ENCODE measurements at regions of chr6 and their contacts with region 1.

Region 1: GRCh38 chr6:31493875-31494694 is 3.9 kb upstream of the MICB start:
- DNase-seq: no peak
- ATAC-seq: peak; percentile 73
- H3K4me3 ChIP-seq: peak overlapping the region; percentile 79 to 83
- H3K27ac ChIP-seq: peak overlapping the region; percentile 95
- H3K4me1 ChIP-seq: peaks cover 11% of the 10 kb centered on the region; the same call in 1 of the 2 replicates
- H3K27me3 ChIP-seq: no peaks in the 10 kb centered on the region
- CTCF ChIP-seq: peak; percentile 95

Region 2: DNA sequence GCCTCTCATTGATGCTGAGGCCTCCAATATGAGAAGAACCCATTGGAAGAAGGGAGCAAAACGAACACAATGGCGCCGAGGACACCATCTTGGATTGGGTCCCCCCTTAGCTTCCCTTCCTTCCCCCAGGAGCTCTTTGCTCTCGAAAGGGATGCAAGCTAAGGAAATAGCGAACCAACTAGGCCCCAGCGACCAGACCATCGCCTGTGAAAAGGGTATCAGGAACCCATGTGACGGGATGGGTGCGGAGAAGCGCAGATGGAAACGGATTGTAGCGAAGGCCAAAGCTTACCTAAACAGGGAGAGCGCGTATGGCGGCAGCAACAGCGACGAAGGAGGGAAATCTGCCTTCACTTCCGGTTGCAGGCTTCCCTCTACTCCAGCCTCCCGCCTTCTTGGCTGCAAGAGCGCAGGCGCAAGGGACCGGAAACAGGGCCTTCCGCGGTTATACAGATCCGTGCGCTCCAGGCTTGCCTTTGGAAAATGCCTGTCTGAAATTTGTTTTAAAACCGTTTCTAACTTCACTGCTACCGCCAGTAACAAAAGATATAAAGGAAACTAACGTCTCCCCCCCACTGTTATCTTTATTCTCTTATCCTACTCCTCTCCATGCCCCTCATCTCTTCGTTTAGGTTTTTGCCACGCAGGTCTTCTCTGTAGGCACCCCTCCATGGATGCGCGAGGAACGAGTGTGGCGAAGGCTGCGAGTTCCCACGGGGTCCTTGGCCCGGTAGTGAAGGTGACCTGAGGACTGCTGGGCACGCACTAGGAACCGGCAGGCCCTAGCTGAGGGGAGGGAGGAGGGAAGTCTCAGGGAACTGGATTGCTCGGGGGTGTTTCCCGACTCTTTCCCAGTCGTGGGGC is 47.8 kb after region 1 on chr6 and contains the start of gene DDX39B:
- CTCF ChIA-PET with region 1: no interaction called
- POLR2A ChIA-PET with region 1: interaction called, 8 read pairs
- in situ Hi-C with region 1: no loop called
- intact Hi-C with region 1: loop called (anchors 2 kb)
- DNase-seq: peak; percentile 86
- ATAC-seq: peak; percentile 91
- H3K4me3 ChIP-seq: peak within 1 kb of the TSS; percentile 54 to 98
- H3K27ac ChIP-seq: peak within 1 kb of the TSS; percentile 97
- H3K4me1 ChIP-seq: peaks cover 19% of the 10 kb centered on the region
- H3K27me3 ChIP-seq: no peaks in the 10 kb centered on the region
- CTCF ChIP-seq: no peak
- total RNA-seq, gene DDX39B: 401 TPM

Region 3: DNA sequence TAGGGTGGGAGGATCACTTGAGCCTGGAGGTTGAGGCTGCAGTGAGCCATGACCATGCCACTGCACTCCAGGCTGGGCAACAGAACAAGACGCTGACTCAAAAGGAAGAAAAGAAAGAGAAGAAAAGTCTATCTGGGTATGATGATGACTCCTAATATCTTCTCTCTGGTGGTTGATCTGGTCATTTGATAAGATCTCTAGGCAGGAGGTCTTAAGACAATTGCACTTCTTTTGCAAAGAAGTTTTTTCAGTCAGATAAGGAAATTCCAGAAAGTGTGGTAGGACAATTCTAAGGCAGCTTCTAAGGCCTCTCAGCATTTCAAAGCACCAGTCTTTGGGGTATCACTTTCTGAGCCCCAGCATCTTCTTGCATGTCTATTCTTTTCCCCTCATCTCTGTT is 113.2 kb after region 1 on chr6:
- CTCF ChIA-PET with region 1: interaction called, 11 read pairs
- POLR2A ChIA-PET with region 1: no interaction called
- in situ Hi-C with region 1: no loop called
- intact Hi-C with region 1: no loop called
- DNase-seq: no peak
- ATAC-seq: no peak
- H3K4me3 ChIP-seq: no peak overlapping the region
- H3K27ac ChIP-seq: no peak overlapping the region
- H3K4me1 ChIP-seq: no peaks in the 10 kb centered on the region
- H3K27me3 ChIP-seq: no peaks in the 10 kb centered on the region
- CTCF ChIP-seq: no peak

Region 4: GRCh38 chr6:31665501-31666336 is 171.6 kb after region 1 on chr6 and contains the start of gene CSNK2B:
- CTCF ChIA-PET with region 1: no interaction called
- POLR2A ChIA-PET with region 1: interaction called, 15 read pairs
- in situ Hi-C with region 1: no loop called
- intact Hi-C with region 1: no loop called
- DNase-seq: peak; percentile 88
- ATAC-seq: peak; percentile 91
- H3K4me3 ChIP-seq: peak within 1 kb of the TSS; percentile 76 to 94
- H3K27ac ChIP-seq: peak within 1 kb of the TSS; percentile 96
- H3K4me1 ChIP-seq: peaks cover 14% of the 10 kb centered on the region
- H3K27me3 ChIP-seq: no peaks in the 10 kb centered on the region
- CTCF ChIP-seq: no peak
- total RNA-seq, gene CSNK2B: 219 TPM